Heart right ventricle (tissue), 16 donors: ENCODE measurements at regions of chr19 and their contacts with region 1.

Region 1: DNA sequence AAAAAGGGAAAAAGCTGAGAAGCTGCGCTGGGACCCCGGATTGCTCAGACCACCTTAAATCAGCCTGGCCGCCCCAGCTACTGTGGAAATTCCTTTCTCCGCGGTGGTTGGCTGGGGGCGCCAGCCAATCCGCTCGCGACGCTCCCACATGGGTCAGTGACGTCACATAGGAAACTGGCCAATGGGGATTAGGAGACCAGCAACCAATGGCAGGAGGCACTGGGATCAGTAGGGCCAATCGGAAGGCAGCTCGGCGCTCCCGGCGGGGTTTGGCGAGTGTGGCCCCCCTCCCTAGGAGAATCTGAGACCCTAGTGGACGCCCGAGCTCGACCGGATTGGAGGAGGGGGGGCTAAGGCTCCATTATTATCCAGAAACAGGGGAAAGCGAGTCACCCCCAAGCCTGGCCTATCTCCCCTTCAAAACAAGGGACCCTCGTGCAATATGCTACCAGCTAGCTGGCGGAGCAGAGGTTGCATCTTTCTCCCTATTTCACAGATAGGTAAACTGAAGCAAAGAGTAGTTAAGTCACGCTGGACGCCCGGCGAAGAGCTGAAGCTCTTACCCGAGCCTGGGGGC is 6.5 kb upstream of the TLE2 start:
- DNase-seq: peak; percentile 97 to 100
- ATAC-seq: peak; percentile 93 to 98 (median 96)
- H3K4me3 ChIP-seq: peak overlapping the region; percentile 47 to 66 (median 62)
- H3K27ac ChIP-seq: peak overlapping the region; percentile 83 to 97 (median 92)
- H3K4me1 ChIP-seq: peaks cover 12 to 26% (median 21%) of the 10 kb centered on the region in 9 donors
- H3K27me3 ChIP-seq: peaks cover 0 to 3% (median 0%) of the 10 kb centered on the region in 7 donors
- CTCF ChIP-seq: peak in 1 of 9 donors; percentile 9

Region 2: DNA sequence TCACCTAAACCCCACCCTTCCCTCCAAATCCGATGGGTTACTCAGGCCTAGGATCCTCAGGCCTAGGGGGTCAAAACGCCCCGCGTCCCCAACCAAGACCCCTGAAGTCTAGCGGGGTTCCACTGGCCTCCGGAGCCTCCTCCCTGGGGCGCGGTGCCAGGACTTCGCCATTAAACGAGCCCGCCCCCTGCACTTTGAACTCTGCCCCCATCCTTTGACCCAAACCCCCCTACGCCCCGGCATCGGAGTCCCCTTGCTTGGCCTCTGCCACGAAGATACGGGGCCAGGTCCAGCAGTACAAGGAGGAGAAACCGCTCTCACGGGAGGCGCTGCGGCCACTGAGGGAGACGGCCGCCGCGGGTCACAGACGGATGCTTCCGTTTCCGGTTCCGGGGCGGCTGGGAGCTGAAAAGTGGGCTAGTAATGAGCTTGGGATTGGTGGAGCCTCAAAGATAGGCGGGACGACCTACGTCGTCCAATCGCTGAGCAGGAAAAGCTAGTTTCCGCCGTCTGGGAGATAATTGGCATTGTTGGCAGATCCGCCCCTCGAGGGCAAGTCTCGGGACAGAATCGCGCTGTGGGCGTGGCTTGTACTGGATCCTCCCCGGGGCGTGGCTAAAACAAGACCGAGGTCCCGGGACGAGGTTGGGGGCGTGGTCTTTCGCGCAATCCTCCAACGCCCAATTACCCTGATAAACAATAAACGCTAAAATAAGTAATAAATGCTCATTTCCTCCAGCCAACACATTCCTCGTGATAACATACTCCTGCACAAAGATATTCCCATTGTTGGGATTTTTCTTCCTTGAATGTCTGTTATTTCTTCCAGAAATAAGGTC is 85.1 kb before region 1 on chr19:
- intact Hi-C with region 1: loop called in 1 of 10 experiments (anchors 5 kb)
- DNase-seq: peak; percentile 100
- ATAC-seq: peak; percentile 94 to 98 (median 96)
- H3K4me3 ChIP-seq: peak overlapping the region; percentile 68 to 97 (median 80)
- H3K27ac ChIP-seq: peak overlapping the region; percentile 90 to 99 (median 95)
- H3K4me1 ChIP-seq: peaks cover 7 to 35% (median 19%) of the 10 kb centered on the region in 9 donors
- H3K27me3 ChIP-seq: no peaks in the 10 kb centered on the region
- CTCF ChIP-seq: no peak

Region 3: DNA sequence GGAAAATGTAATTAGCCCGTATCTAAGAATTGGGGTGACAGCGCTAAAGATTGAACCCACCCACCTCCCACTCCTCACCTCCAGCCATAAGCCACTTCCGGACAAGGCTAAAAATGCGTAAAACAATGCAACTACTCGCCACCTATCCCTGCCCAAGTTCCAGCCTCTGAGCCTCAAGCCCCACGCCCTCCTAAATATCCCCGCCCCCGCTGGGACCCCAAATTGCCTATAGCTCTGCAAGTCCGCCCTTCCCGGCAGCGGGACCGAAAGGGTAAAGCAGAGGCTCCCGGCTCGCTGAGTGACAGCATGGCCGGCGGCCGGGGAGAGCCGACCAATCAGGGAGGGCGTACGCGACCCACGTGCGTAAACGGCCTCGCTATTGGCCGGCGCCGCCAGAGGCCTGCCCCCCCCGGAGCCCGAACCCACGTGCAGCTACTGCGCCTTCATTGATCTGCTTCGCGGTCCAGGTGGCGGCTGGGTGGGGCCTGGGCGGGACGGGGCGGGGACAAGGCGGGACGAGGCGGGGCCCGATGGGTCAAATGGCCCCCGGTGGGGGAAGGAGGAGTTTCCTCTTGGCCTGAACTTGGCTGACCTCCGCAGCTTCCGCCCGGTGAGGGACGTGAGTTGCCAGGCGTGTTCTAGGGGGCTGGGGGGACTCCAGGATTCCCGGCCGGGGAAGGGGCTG is 58.5 kb before region 1 on chr19 and contains the start of gene TLE6:
- intact Hi-C with region 1: loop called in 8 of 10 experiments (anchors 2 to 10 kb)
- DNase-seq: peak; percentile 96 to 97
- ATAC-seq: peak; percentile 94 to 97 (median 96)
- H3K4me3 ChIP-seq: peak within 1 kb of the TSS; percentile 30 to 63 (median 54)
- H3K27ac ChIP-seq: peak within 1 kb of the TSS in 9 of 10 donors; percentile 25 to 68 (median 51)
- H3K4me1 ChIP-seq: peaks cover 20 to 63% (median 57%) of the 10 kb centered on the region in 9 donors
- H3K27me3 ChIP-seq: no peaks in the 10 kb centered on the region
- CTCF ChIP-seq: no peak
- total RNA-seq, gene TLE6: 0.34 to 2.8 (median 0.45) TPM in 7 of 10 donors, not detected in the others

Region 4: DNA sequence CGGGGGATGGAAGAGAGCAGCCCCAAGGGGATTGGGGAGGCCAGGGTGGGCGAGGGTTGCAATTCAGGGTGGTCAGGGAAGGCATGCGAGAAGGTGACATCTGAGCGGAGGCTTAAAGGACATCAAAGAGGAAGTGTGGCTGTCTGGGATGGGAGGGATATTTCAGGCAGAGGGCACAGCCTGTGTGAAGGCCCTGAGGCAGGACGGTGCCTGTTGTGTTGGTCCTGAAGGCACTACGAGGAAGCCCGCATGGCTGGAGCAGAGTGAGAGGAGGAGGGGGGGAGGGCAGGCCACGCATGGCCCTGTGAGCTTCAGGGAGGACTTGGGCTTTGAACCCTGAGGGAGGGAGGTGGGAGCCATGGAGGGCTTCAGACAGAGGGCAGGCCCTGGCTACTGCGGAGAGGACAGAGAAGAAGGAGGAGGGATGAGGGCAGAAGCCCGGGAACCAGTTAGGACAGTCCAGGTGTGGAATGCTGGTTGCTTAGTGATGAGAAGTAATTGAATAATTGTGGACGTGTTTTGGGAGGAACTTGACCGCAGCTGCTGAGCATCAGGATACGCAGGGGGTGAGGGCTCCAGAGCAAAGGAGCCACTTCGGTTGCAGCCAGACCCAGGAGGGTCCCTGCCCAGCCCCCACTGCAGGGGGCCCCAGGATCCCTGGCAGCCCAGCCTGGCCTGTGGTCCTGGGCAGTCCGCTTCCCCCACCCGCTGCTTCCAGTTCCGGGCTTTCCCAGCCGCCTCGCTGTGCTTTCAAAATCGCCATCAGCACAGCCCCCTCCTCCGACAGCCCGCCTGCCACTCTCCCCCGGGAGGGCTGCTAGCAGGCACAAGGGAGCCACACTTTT is 52.1 kb before region 1 on chr19:
- intact Hi-C with region 1: loop called in 6 of 10 experiments (anchors 5 to 10 kb)
- DNase-seq: peak; percentile 75
- ATAC-seq: peak; percentile 56 to 79 (median 66)
- H3K4me3 ChIP-seq: peak overlapping the region in 9 of 10 donors; percentile 17 to 54 (median 40)
- H3K27ac ChIP-seq: peak overlapping the region; percentile 62 to 89 (median 72)
- H3K4me1 ChIP-seq: peaks cover 14 to 33% (median 24%) of the 10 kb centered on the region in 9 donors
- H3K27me3 ChIP-seq: peaks cover 0 to 18% (median 0%) of the 10 kb centered on the region in 7 donors
- CTCF ChIP-seq: no peak

Region 5: GRCh38 chr19:3057306-3057714 is 21.7 kb after region 1 on chr19:
- intact Hi-C with region 1: loop called in 3 of 10 experiments (anchors 1 to 2 kb)
- DNase-seq: peak; percentile 86 to 91
- ATAC-seq: peak; percentile 62 to 86 (median 76)
- H3K4me3 ChIP-seq: peak overlapping the region in 5 of 10 donors; percentile 5 to 22 (median 18)
- H3K27ac ChIP-seq: peak overlapping the region; percentile 38 to 100 (median 82)
- H3K4me1 ChIP-seq: peaks cover 12 to 64% (median 49%) of the 10 kb centered on the region in 9 donors
- H3K27me3 ChIP-seq: no peaks in the 10 kb centered on the region
- CTCF ChIP-seq: peak in 1 of 9 donors; percentile 18

Region 6: GRCh38 chr19:3062168-3063102 is 26.8 kb after region 1 on chr19 and contains the start of gene TLE5:
- intact Hi-C with region 1: loop called in 3 of 10 experiments (anchors 1 to 2 kb)
- DNase-seq: peak; percentile 67 to 79
- ATAC-seq: peak; percentile 25 to 77 (median 55)
- H3K4me3 ChIP-seq: peak within 1 kb of the TSS; percentile 68 to 98 (median 86)
- H3K27ac ChIP-seq: peak within 1 kb of the TSS; percentile 96 to 100 (median 99)
- H3K4me1 ChIP-seq: peaks cover 9 to 50% (median 47%) of the 10 kb centered on the region in 9 donors
- H3K27me3 ChIP-seq: no peaks in the 10 kb centered on the region
- CTCF ChIP-seq: peak in 2 of 9 donors; percentile 5 to 21
- total RNA-seq, gene TLE5: 653 to 857 (median 758) TPM

Region 7: GRCh38 chr19:3094601-3095437 is 59.2 kb after region 1 on chr19:
- intact Hi-C with region 1: loop called in 1 of 10 experiments (anchors 5 kb)
- DNase-seq: no peak
- ATAC-seq: no peak
- H3K4me3 ChIP-seq: peak overlapping the region; percentile 86 to 100 (median 98)
- H3K27ac ChIP-seq: peak overlapping the region; percentile 5 to 95 (median 90)
- H3K4me1 ChIP-seq: peaks cover 29 to 51% (median 47%) of the 10 kb centered on the region in 9 donors
- H3K27me3 ChIP-seq: peaks cover 0 to 32% (median 0%) of the 10 kb centered on the region in 7 donors
- CTCF ChIP-seq: no peak

Region 8: GRCh38 chr19:3343619-3344502 is 308.2 kb after region 1 on chr19:
- intact Hi-C with region 1: no loop called
- DNase-seq: peak; percentile 76 to 77
- ATAC-seq: peak; percentile 69 to 86 (median 79)
- H3K4me3 ChIP-seq: peak overlapping the region in 7 of 10 donors; percentile 17 to 41 (median 35)
- H3K27ac ChIP-seq: peak overlapping the region; percentile 52 to 82 (median 70)
- H3K4me1 ChIP-seq: peaks cover 11 to 33% (median 27%) of the 10 kb centered on the region in 9 donors
- H3K27me3 ChIP-seq: no peaks in the 10 kb centered on the region
- CTCF ChIP-seq: peak in 5 of 9 donors; percentile 2 to 36 (median 10)